PC-3 (cell line): ENCODE measurements at regions of chr6 and their contacts with region 1.

Region 1: DNA sequence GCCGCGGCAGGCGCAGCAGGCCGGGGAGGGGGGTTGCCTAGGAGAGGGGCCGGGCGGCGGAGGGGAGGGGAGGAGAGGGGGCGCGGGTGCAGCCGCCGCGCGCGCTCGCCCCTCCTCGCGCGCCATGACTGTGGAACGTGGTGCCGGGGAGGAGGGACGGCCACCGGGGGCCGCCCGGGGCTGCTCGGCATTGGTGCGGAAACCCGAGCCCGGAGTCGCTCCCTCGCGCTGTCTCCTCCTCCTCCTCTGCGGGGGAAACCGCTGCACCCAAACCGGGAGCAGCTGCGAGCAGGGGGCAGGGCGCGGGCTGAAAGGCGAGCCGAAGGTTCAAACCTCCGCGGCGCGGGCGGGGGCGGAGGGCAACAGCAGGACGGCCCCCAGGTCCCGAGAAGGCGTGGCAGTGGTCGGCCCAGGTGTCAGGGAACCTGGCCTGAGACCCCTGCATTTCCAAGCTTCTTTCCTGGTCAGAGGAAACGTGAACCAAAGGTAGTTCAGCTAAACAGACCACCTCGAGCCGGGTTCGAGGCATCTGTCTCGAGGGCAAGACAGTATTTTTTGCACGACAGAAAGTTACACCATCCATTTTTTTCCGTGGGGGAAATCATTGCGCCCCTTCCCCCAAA is 1.4 kb upstream of the TRERF1 start:
- DNase-seq: peak; percentile 86
- ATAC-seq: peak; percentile 72
- H3K4me3 ChIP-seq: peak overlapping the region; percentile 71
- H3K27ac ChIP-seq: peak overlapping the region; percentile 83
- H3K4me1 ChIP-seq: peaks cover 19% of the 10 kb centered on the region
- H3K27me3 ChIP-seq: no peaks in the 10 kb centered on the region
- CTCF ChIP-seq: no peak

Region 2: DNA sequence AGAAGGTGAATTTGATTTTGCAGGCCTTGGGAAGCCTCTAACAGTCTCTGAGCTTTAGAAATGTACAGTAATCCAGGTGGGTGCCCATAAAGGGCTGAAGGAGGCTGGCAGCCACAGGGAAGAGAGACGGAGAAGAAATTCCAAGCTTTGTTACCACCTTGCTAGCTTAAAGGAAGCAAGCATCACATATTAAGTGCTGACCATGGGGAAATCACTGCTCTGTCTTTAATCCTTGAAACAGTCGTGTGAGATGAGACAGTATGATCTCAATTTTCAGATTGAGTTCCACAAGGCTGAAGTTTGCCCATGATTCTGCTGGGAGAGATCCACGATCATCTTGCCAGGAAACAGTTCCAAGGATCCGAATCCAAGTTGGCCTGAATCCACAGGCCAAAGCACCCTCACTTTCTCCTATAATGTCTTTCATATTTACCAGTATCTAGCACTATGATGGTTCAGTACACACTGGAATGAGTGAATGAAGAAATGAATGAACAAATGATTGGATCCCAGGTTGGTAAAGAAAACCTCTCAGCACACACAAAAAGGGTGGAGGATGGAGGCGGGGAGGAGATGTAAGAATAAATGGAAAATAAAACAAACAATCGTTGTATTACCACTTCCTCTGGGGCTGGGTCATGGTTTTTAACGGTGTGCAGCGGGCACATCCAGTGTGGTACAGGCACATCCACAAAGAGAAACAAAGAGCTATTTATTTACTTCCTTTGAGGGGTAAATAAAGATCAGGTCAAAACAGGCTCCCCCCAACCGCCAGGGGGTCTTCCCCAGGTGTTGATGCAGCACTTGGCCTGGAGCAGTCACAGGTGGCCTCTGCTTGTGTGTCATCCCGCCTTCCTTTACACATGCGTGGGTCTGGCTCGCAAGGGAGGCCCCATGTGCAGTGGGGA is 431.0 kb before region 1 on chr6:
- CTCF ChIA-PET with region 1: no interaction called
- POLR2A ChIA-PET with region 1: no interaction called
- intact Hi-C with region 1: no loop called
- DNase-seq: no peak
- ATAC-seq: no peak
- H3K4me3 ChIP-seq: no peak overlapping the region
- H3K27ac ChIP-seq: no peak overlapping the region
- H3K4me1 ChIP-seq: peaks cover 5% of the 10 kb centered on the region; the same call in 1 of the 2 replicates
- H3K27me3 ChIP-seq: no peaks in the 10 kb centered on the region
- CTCF ChIP-seq: no peak

Region 3: DNA sequence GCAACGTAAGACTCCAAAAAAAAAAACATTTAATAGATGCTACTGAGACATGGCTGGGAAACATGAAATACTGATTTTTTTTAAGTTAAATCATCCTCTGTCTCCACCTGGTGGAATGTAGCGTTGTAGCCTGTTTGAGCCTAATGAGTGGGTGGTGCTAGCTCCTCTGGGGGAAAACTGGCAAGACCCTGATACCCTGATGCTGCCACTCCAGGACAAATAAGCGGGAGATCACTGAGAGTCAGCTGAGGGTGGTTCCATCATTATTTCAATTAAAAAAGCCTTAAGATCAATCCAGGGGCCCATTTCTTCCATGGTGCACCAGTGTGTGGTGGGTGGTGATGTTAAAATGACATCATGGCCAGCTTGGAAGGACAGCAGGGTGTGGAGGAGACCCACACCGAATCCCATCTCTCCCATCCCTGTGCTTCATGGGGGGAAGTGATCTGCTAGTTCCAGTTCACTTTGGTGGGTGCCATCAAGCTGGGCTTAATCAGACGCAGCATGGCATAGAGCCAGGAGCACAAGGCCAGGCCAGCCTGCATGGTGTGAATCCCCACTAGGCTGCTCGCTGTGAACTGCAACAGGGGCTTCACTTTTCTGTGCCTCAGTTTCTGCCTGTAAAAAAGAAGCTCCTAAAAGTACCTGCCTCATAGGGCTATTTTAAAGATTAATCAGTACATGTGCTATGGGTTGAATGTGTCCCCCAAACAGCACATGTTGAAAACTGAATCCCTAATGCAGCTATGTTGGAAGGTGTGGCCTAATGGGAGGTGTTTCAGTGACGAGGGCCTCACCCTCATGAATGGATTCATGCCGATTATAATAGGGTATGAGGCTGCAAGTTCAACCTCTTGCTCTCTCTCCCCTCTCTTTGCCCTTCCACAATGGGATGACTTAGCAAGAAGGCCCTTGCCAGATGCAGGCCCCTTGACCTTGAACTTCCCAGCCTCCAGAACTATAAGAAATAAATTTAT is 222.5 kb before region 1 on chr6:
- CTCF ChIA-PET with region 1: no interaction called
- POLR2A ChIA-PET with region 1: no interaction called
- intact Hi-C with region 1: loop called (anchors 2 kb)
- DNase-seq: peak; percentile 66
- ATAC-seq: no peak
- H3K4me3 ChIP-seq: no peak overlapping the region
- H3K27ac ChIP-seq: peak overlapping the region; percentile 98
- H3K4me1 ChIP-seq: peaks cover 47% of the 10 kb centered on the region
- H3K27me3 ChIP-seq: no peaks in the 10 kb centered on the region
- CTCF ChIP-seq: peak; percentile 88

Region 4: DNA sequence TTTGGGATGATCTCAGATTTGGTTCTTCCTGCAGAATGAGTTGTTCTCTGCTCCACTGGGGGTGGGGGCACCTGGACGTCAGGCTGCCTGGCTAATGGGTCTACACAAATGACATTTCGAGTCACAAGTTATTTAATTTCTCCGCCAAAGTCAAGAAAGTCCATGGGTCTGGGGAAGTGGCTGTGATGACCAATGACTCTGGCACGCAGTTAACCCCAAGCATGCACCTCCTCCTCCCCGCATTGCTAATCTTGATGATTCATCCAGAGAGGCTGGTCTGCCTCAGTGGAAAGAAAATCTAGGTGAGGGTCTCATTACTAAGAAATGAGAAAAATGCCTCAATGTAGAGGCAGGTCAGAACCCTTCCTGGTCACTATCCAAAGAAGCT is 137.2 kb before region 1 on chr6:
- CTCF ChIA-PET with region 1: no interaction called
- POLR2A ChIA-PET with region 1: no interaction called
- intact Hi-C with region 1: loop called (anchors 1 kb)
- DNase-seq: peak; percentile 99
- ATAC-seq: peak; percentile 86
- H3K4me3 ChIP-seq: peak overlapping the region; percentile 33; the same call in 1 of the 2 replicates
- H3K27ac ChIP-seq: peak overlapping the region; percentile 99
- H3K4me1 ChIP-seq: peaks cover 60% of the 10 kb centered on the region
- H3K27me3 ChIP-seq: no peaks in the 10 kb centered on the region
- CTCF ChIP-seq: no peak

Region 5: GRCh38 chr6:42338663-42339218 is 114.4 kb before region 1 on chr6:
- CTCF ChIA-PET with region 1: interaction called, 4 read pairs
- POLR2A ChIA-PET with region 1: no interaction called
- intact Hi-C with region 1: loop called (anchors 1 kb)
- DNase-seq: peak; percentile 98
- ATAC-seq: peak; percentile 93
- H3K4me3 ChIP-seq: peak overlapping the region; percentile 12; the same call in 1 of the 2 replicates
- H3K27ac ChIP-seq: peak overlapping the region; percentile 94
- H3K4me1 ChIP-seq: peaks cover 33% of the 10 kb centered on the region
- H3K27me3 ChIP-seq: no peaks in the 10 kb centered on the region
- CTCF ChIP-seq: no peak

Region 6: GRCh38 chr6:42402184-42402583 is 51.0 kb before region 1 on chr6:
- CTCF ChIA-PET with region 1: no interaction called
- POLR2A ChIA-PET with region 1: interaction called, 13 read pairs
- intact Hi-C with region 1: loop called (anchors 5 kb)
- DNase-seq: peak; percentile 46
- ATAC-seq: no peak; the same call in 1 of the 2 replicates
- H3K4me3 ChIP-seq: no peak overlapping the region
- H3K27ac ChIP-seq: no peak overlapping the region
- H3K4me1 ChIP-seq: peaks cover 47% of the 10 kb centered on the region
- H3K27me3 ChIP-seq: no peaks in the 10 kb centered on the region
- CTCF ChIP-seq: no peak

Region 7: DNA sequence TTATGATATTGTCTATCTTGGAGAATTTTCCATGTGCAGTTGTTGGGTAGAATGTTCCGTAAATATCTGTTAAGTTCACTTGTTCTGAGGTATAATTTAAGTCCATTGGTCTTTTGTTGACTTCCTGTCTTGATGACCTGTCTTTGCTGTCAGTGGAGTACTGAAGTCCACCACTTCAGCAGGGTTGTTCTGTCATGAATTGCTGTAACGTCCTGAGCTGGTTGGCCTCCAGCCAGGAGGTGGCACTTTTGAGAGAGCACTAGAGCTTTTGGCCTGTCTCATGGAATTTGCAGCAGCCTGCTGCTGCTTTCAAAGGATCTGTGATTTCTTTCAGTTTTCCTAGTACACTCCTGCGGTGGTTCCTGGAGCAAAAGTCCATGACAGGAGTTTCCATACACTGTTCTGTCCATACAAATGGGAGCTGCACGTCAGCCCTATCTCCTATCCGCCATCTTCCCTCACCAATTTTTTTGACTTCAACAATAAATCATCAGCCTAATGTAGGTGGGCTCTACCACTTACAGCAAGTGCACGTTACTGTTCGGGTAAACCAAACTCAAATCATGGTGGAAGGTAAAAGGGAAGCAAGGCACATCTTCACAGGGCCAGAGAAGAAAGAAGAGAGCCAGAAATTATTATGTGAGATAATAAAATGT is 45.5 kb after region 1 on chr6:
- CTCF ChIA-PET with region 1: no interaction called
- POLR2A ChIA-PET with region 1: no interaction called
- intact Hi-C with region 1: no loop called
- DNase-seq: peak; percentile 3
- ATAC-seq: no peak
- H3K4me3 ChIP-seq: no peak overlapping the region
- H3K27ac ChIP-seq: no peak overlapping the region
- H3K4me1 ChIP-seq: no peaks in the 10 kb centered on the region
- H3K27me3 ChIP-seq: no peaks in the 10 kb centered on the region
- CTCF ChIP-seq: no peak

Region 8: DNA sequence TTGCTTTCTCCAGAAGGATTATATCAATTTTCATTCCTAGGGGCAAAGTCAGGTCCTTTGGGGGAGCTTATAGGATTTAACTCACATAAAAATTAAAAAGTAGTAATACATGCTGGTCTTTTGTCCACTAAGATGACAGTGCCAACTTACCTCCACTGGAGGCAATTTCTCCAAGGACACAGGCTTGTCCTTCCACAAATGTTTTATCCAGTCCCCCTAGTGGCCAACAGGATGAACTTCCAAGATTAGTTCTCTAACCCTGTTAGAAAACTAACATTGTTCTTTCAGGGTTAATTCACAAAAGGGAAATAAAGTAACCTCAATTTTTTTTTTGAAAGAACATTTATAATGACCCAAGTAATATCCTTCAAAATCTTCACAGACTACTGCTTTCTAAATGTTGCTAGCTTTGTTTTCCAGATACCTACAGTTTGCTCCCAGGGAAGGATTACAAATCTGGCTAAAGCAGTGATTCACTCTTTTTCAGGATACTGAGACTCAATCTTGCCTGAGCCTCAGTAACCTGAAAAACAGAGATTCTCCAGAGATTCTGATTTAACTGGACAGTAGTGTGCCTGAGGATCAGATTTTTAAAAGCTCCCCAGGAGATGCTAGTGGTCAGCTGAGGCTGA is 79.0 kb after region 1 on chr6:
- CTCF ChIA-PET with region 1: no interaction called
- POLR2A ChIA-PET with region 1: no interaction called
- intact Hi-C with region 1: loop called (anchors 1 kb)
- DNase-seq: peak; percentile 75
- ATAC-seq: peak; percentile 63
- H3K4me3 ChIP-seq: no peak overlapping the region
- H3K27ac ChIP-seq: no peak overlapping the region
- H3K4me1 ChIP-seq: peaks cover 14% of the 10 kb centered on the region
- H3K27me3 ChIP-seq: no peaks in the 10 kb centered on the region
- CTCF ChIP-seq: peak; percentile 94

Region 9: DNA sequence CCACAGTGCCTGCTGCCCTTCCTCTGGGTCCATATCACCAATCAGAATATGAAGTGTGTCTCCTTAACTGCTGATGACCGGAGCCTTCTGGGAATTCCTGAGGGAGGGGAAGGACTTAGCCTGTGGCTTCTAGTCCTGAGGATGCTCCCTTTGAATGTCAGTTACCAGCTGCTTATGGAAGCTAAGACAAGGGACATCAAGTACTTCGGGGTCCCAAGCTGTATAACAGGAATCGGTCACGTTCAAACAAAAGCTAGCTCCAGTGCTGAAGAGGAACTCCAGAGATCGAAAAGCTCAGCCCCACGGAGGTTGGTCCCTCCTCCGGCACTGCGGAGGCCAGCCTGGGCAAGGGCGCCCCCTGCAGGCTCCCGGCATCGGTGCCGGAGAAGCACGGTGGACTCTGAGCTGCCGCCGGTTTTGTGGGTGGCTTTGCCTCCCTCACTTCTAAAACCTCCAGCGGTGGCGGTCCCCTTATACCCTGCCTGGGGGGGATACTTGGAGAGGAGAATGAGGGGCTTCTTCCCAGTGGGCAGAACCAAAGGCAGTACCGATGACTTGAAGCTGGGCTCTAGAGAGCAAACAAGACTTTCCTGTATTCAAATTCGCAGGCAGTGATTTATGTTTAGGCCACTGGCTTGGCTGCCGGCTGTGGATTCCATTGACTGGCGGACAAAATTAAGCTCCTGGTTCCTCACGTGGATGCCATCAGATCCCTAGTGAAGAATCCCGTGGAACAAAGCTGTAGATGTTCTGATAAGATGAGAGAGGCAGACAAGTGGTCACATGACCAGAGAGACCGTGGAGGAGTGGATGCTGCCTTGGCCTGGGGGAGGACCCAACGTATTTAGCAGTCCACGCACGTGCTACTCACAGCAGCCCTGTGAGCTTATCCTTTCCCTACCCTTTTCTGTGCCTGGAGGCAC is 94.5 kb after region 1 on chr6:
- CTCF ChIA-PET with region 1: interaction called, 14 read pairs
- POLR2A ChIA-PET with region 1: no interaction called
- intact Hi-C with region 1: loop called (anchors 5 kb)
- DNase-seq: peak; percentile 84
- ATAC-seq: peak; percentile 99
- H3K4me3 ChIP-seq: peak overlapping the region; percentile 67
- H3K27ac ChIP-seq: no peak overlapping the region
- H3K4me1 ChIP-seq: peaks cover 10% of the 10 kb centered on the region
- H3K27me3 ChIP-seq: no peaks in the 10 kb centered on the region
- CTCF ChIP-seq: peak; percentile 98